CD8-positive, alpha-beta T cell (primary cell): ENCODE measurements at regions of chr17 and their contacts with region 1.

Region 1: GRCh38 chr17:48024937-48025906 is 12.4 kb downstream of the COPZ2 start:
- DNase-seq: peak; percentile 96 to 99 (median 97)
- ATAC-seq: peak; percentile 91
- H3K4me3 ChIP-seq: peak overlapping the region; percentile 57 to 60
- H3K4me3 Mint-ChIP-seq: peak overlapping the region; percentile 84
- H3K27ac ChIP-seq: peak overlapping the region in 1 of 2 experiments; percentile 48
- H3K27ac Mint-ChIP-seq: peak overlapping the region; percentile 83
- H3K4me1 ChIP-seq: peaks cover 35% of the 10 kb centered on the region
- H3K4me1 Mint-ChIP-seq: peaks cover 23% of the 10 kb centered on the region
- H3K27me3 ChIP-seq: peaks cover 6 to 29% of the 10 kb centered on the region in 2 experiments
- H3K27me3 Mint-ChIP-seq: peaks cover 46% of the 10 kb centered on the region
- CTCF ChIP-seq: peak; percentile 70

Region 2: GRCh38 chr17:47831003-47831933 is 194.0 kb before region 1 on chr17 and contains the starts of genes LRRC46 and MRPL10:
- CTCF ChIA-PET with region 1: no interaction called
- POLR2A ChIA-PET with region 1: no interaction called
- intact Hi-C with region 1: loop called in 1 of 2 experiments (anchors 5 kb)
- DNase-seq: peak; percentile 80 to 96 (median 91)
- ATAC-seq: peak; percentile 71
- H3K4me3 ChIP-seq: peak within 1 kb of the TSS; percentile 87 to 95
- H3K4me3 Mint-ChIP-seq: peak within 1 kb of the TSS; percentile 91
- H3K27ac ChIP-seq: peak within 1 kb of the TSS; percentile 84 to 96
- H3K27ac Mint-ChIP-seq: peak within 1 kb of the TSS; percentile 98
- H3K4me1 ChIP-seq: peaks cover 30% of the 10 kb centered on the region
- H3K4me1 Mint-ChIP-seq: peaks cover 51% of the 10 kb centered on the region
- H3K27me3 ChIP-seq: no peaks in the 10 kb centered on the region
- H3K27me3 Mint-ChIP-seq: no peaks in the 10 kb centered on the region
- CTCF ChIP-seq: peak; percentile 36
- total RNA-seq, gene LRRC46: 0.43 to 1.5 TPM
- total RNA-seq, gene MRPL10: 67.5 to 69.7 TPM

Region 3: DNA sequence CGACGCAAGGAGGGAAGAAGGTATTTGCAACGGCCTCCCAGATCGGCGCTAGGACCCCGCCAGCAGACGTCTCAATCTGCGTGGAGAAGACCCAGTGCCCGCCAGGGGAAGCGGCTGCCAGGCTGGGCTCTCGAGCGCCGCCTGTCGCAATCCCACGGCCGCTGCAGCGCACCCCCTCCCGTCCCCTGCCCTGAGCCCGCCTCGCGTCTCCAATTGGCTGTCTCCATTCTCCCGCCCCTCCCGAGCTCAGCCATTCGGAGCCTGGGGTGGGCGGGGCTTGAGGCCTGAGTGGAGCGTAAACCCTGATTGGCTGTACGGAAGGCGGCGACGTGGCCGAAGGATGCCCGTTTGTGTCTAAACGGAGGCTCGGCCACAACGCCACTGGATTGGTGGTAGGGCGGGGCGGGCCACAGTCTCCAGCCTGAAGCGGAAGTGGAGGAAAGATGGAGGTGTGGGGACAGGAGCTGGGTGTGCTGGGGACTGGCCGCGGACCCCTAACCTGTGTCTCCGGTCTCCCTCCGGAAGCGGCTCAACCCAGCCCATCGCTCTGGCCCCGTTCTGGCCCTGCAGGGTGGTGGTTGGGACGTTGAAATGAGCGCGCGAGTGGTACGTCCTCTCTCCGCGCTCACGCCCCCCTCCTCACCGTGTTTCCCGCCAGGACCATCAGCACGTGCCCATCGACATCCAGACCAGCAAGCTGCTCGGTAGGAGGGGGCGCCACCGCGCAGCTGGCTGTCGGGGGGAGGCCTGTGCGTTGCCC is 54.3 kb before region 1 on chr17 and contains the start of gene CDK5RAP3:
- CTCF ChIA-PET with region 1: interaction called, 4 read pairs
- POLR2A ChIA-PET with region 1: no interaction called
- intact Hi-C with region 1: loop called in 1 of 2 experiments (anchors 2 kb)
- DNase-seq: peak; percentile 97 to 99 (median 99)
- ATAC-seq: peak; percentile 98
- H3K4me3 ChIP-seq: peak within 1 kb of the TSS; percentile 77 to 99
- H3K4me3 Mint-ChIP-seq: peak within 1 kb of the TSS; percentile 98
- H3K27ac ChIP-seq: peak within 1 kb of the TSS; percentile 40 to 84
- H3K27ac Mint-ChIP-seq: peak within 1 kb of the TSS; percentile 89
- H3K4me1 ChIP-seq: peaks cover 19% of the 10 kb centered on the region
- H3K4me1 Mint-ChIP-seq: peaks cover 34% of the 10 kb centered on the region
- H3K27me3 ChIP-seq: no peaks in the 10 kb centered on the region
- H3K27me3 Mint-ChIP-seq: no peaks in the 10 kb centered on the region
- CTCF ChIP-seq: peak; percentile 97
- total RNA-seq, gene CDK5RAP3: 220 to 231 TPM

Region 4: DNA sequence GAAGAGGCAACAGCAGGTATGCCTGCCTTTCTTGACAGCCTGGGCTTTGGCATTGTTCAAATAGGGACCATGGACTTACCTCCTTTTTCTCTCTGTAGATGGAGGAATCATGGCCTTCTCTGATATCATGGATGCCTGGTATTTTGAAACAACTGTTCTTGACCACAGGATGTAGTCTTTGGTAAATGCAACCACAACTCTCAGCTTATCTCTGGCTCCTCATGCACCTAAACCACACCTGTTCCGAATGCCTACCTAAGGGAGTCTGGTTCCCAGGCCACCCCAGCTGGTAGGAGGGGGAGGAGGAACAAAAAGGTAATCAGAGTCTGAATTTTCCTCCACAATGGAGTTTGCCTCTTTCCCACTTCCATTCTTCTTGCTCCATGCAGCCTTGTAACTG is 35.5 kb before region 1 on chr17:
- CTCF ChIA-PET with region 1: no interaction called
- POLR2A ChIA-PET with region 1: no interaction called
- intact Hi-C with region 1: no loop called
- DNase-seq: no peak
- ATAC-seq: no peak
- H3K4me3 ChIP-seq: no peak overlapping the region
- H3K4me3 Mint-ChIP-seq: no peak overlapping the region
- H3K27ac ChIP-seq: no peak overlapping the region
- H3K27ac Mint-ChIP-seq: no peak overlapping the region
- H3K4me1 ChIP-seq: no peaks in the 10 kb centered on the region
- H3K4me1 Mint-ChIP-seq: no peaks in the 10 kb centered on the region
- H3K27me3 ChIP-seq: no peaks in the 10 kb centered on the region
- H3K27me3 Mint-ChIP-seq: peaks cover 2% of the 10 kb centered on the region
- CTCF ChIP-seq: no peak

Region 5: DNA sequence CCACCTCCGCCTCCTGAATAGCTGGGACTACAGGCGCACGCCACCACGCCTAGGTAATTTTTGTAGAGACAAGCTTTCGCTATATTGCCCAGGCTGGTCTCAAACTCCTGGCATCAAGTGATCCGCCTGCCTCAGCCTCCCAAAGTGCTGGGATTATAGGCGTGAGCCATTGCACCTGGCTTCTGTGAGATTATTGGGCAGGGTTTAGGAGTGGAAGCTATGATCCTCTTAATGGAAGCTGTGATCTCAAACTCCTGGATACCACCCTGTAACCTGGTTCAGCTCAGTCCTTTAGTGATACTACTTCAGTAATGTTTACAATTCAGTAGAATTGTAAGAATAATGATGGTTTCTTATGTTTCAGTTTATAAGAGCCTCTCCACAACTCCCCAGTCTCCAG is 37.1 kb after region 1 on chr17:
- CTCF ChIA-PET with region 1: interaction called, 15 read pairs
- POLR2A ChIA-PET with region 1: no interaction called
- intact Hi-C with region 1: no loop called
- DNase-seq: no peak
- ATAC-seq: no peak
- H3K4me3 ChIP-seq: no peak overlapping the region
- H3K4me3 Mint-ChIP-seq: no peak overlapping the region
- H3K27ac ChIP-seq: no peak overlapping the region
- H3K27ac Mint-ChIP-seq: peak overlapping the region; percentile 16
- H3K4me1 ChIP-seq: no peaks in the 10 kb centered on the region
- H3K4me1 Mint-ChIP-seq: no peaks in the 10 kb centered on the region
- H3K27me3 ChIP-seq: no peaks in the 10 kb centered on the region
- H3K27me3 Mint-ChIP-seq: no peaks in the 10 kb centered on the region
- CTCF ChIP-seq: no peak

Region 6: DNA sequence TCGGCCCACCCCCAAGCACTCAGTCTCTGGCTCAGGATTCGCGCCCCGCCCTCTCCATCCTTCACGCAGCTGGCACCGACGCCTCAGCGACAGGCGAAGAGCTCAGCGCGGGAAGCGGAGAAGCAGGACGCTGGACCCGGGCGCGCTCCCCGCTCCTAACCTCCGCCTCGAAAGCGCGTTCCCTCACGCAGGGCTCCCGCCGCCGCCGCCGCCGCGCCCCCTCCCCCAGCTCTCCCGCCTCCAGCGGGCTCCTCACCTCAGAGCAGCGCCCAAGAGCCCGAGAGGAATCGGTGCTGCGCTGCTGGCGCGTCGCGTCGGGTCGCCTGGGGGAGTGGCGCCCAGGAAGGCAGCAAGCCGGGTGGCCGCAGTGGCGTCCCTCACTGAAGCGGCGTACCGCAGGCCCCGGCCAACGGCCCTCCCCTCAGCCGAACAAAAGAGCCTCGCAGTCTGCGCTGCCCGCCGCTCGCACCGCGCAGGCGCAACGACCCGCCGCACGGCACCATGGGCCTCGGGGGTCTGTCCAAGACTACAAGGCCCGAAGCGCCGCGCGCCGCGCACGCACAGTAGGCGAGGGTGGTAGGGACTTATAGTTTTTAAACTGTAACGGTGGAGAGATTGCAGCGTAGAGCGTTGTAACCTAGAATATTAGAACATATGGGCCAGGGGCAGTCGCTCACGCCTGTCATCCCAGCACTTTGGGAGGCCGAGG is 75.9 kb after region 1 on chr17 and contains the start of gene CBX1:
- CTCF ChIA-PET with region 1: interaction called, 10 read pairs
- POLR2A ChIA-PET with region 1: no interaction called
- intact Hi-C with region 1: loop called in 1 of 2 experiments (anchors 1 kb)
- DNase-seq: peak; percentile 84 to 96 (median 94)
- ATAC-seq: peak; percentile 96
- H3K4me3 ChIP-seq: peak within 1 kb of the TSS; percentile 65 to 91
- H3K4me3 Mint-ChIP-seq: peak within 1 kb of the TSS; percentile 89
- H3K27ac ChIP-seq: peak within 1 kb of the TSS; percentile 24 to 50
- H3K27ac Mint-ChIP-seq: peak within 1 kb of the TSS; percentile 79
- H3K4me1 ChIP-seq: peaks cover 21% of the 10 kb centered on the region
- H3K4me1 Mint-ChIP-seq: peaks cover 37% of the 10 kb centered on the region
- H3K27me3 ChIP-seq: no peaks in the 10 kb centered on the region
- H3K27me3 Mint-ChIP-seq: no peaks in the 10 kb centered on the region
- CTCF ChIP-seq: no peak
- total RNA-seq, gene CBX1: 5.4 to 6.6 TPM

Region 7: GRCh38 chr17:48335858-48336500 is 310.8 kb after region 1 on chr17:
- CTCF ChIA-PET with region 1: no interaction called
- POLR2A ChIA-PET with region 1: no interaction called
- intact Hi-C with region 1: loop called (anchors 1 to 10 kb)
- DNase-seq: peak in 2 of 9 experiments; percentile 68 to 76
- ATAC-seq: peak; percentile 67
- H3K4me3 ChIP-seq: no peak overlapping the region
- H3K4me3 Mint-ChIP-seq: no peak overlapping the region
- H3K27ac ChIP-seq: no peak overlapping the region
- H3K27ac Mint-ChIP-seq: no peak overlapping the region
- H3K4me1 ChIP-seq: no peaks in the 10 kb centered on the region
- H3K4me1 Mint-ChIP-seq: peaks cover 9% of the 10 kb centered on the region
- H3K27me3 ChIP-seq: no peaks in the 10 kb centered on the region
- H3K27me3 Mint-ChIP-seq: no peaks in the 10 kb centered on the region
- CTCF ChIP-seq: peak; percentile 65

Region 8: GRCh38 chr17:48892940-48893645 is 867.9 kb after region 1 on chr17:
- CTCF ChIA-PET with region 1: no interaction called
- POLR2A ChIA-PET with region 1: no interaction called
- intact Hi-C with region 1: loop called in 1 of 2 experiments (anchors 10 kb)
- DNase-seq: peak in 3 of 9 experiments; percentile 33 to 50 (median 38)
- ATAC-seq: no peak
- H3K4me3 ChIP-seq: peak overlapping the region; percentile 52 to 63
- H3K4me3 Mint-ChIP-seq: peak overlapping the region; percentile 93
- H3K27ac ChIP-seq: peak overlapping the region; percentile 55 to 91
- H3K27ac Mint-ChIP-seq: peak overlapping the region; percentile 99
- H3K4me1 ChIP-seq: peaks cover 15% of the 10 kb centered on the region
- H3K4me1 Mint-ChIP-seq: peaks cover 23% of the 10 kb centered on the region
- H3K27me3 ChIP-seq: no peaks in the 10 kb centered on the region
- H3K27me3 Mint-ChIP-seq: no peaks in the 10 kb centered on the region
- CTCF ChIP-seq: no peak